ENCODE measurements at regions of chr7 and their contacts with region 1.

Region 1: GRCh38 chr7:122487131-122487530 is 182.6 kb upstream of the FEZF1 start:
- DNase-seq: no peak
- ATAC-seq: no peak
- H3K4me3 ChIP-seq: no peak overlapping the region
- H3K4me3 Mint-ChIP-seq: no peak overlapping the region
- H3K27ac ChIP-seq: no peak overlapping the region
- H3K27ac Mint-ChIP-seq: no peak overlapping the region
- H3K4me1 ChIP-seq: no peaks in the 10 kb centered on the region
- H3K4me1 Mint-ChIP-seq: no peaks in the 10 kb centered on the region
- H3K27me3 ChIP-seq: no peaks in the 10 kb centered on the region
- H3K27me3 Mint-ChIP-seq: no peaks in the 10 kb centered on the region

Region 2: DNA sequence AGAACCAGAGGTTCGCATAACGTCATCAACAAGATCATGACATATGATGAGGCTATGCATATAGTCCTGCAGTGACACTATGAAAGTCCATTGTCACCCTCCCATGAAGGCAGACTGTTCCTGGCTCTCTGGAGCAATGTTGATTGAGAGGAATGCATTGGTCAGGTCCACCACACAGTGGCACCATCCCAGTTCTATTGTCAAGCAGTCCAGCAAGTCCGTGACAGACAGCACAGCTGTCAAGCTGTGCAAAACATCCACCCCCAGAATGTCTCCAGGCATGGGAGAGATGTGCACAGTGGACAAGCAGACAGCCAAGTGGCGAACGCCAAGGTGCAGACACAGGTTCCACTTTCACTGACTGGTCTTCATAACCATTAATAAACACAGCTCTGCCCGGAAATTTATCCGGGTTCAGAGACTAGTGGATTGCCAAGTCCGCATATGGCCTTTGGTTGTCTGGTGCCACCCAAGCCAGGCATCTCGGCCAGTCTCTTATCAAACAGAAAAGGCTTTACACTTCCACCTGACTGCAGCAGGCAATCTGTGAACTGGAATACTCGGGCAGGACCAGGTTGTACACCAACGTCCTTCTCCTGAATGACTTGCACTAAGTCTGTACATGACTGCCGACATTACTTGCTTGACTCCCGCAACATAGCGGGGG is 204.6 kb after region 1 on chr7:
- CTCF ChIA-PET with region 1: interaction called in 1 of 2 experiments, 15 read pairs
- POLR2A ChIA-PET with region 1: no interaction called
- DNase-seq: no peak
- ATAC-seq: no peak
- H3K4me3 ChIP-seq: no peak overlapping the region
- H3K4me3 Mint-ChIP-seq: no peak overlapping the region
- H3K27ac ChIP-seq: no peak overlapping the region
- H3K27ac Mint-ChIP-seq: no peak overlapping the region
- H3K4me1 ChIP-seq: no peaks in the 10 kb centered on the region
- H3K4me1 Mint-ChIP-seq: no peaks in the 10 kb centered on the region
- H3K27me3 ChIP-seq: no peaks in the 10 kb centered on the region
- H3K27me3 Mint-ChIP-seq: no peaks in the 10 kb centered on the region